CD4-positive, alpha-beta T cell (primary cell): ENCODE measurements at regions of chr12 and their contacts with region 1.

Region 1: DNA sequence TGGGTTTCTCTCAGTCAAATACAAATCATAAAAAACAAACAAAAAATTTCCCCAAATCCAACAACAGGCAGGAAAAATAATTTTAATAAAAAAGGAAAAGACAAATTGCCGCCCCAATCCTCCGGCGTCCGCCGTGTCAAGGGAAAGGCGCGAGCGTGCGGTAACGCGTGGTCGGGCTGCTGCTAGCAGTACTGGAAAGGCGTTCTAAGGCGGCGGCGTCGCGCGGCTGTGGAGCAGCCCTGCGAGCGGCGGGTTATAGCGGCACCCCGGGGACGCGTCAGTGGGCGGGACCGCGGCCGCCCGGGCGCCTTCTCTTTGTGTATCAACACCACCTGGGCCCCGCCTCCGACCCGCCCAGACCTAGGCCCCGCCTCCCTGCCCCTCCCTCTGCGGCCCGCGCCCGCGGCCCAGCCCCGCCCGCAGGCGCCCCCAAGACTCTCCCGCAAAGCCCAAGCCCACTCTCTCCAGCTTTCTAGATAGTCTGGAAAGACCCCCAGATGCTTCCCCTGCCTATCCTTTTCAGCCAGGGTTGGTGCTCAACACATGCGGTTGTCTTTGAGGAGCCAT is at the start of gene SLC38A2:
- DNase-seq: peak; percentile 95 to 99 (median 97)
- ATAC-seq: peak; percentile 79
- H3K4me3 ChIP-seq: peak within 1 kb of the TSS; percentile 96
- H3K4me3 Mint-ChIP-seq: peak within 1 kb of the TSS; percentile 98
- H3K27ac ChIP-seq: peak within 1 kb of the TSS; percentile 85 to 94
- H3K27ac Mint-ChIP-seq: peak within 1 kb of the TSS; percentile 99
- H3K4me1 ChIP-seq: peaks cover 32% of the 10 kb centered on the region
- H3K4me1 Mint-ChIP-seq: peaks cover 64% of the 10 kb centered on the region
- H3K27me3 ChIP-seq: no peaks in the 10 kb centered on the region
- H3K27me3 Mint-ChIP-seq: peaks cover 7% of the 10 kb centered on the region
- CTCF ChIP-seq: no peak
- total RNA-seq, gene SLC38A2: 213 to 222 TPM

Region 2: GRCh38 chr12:45728630-45729232 is 643.9 kb before region 1 on chr12:
- CTCF ChIA-PET with region 1: no interaction called
- POLR2A ChIA-PET with region 1: interaction called, 5 read pairs
- intact Hi-C with region 1: loop called (anchors 5 kb)
- DNase-seq: peak; percentile 94 to 99 (median 96)
- ATAC-seq: peak; percentile 71
- H3K4me3 ChIP-seq: peak overlapping the region; percentile 77
- H3K4me3 Mint-ChIP-seq: peak overlapping the region; percentile 100
- H3K27ac ChIP-seq: peak overlapping the region; percentile 98 to 99
- H3K27ac Mint-ChIP-seq: peak overlapping the region; percentile 84
- H3K4me1 ChIP-seq: peaks cover 8% of the 10 kb centered on the region
- H3K4me1 Mint-ChIP-seq: peaks cover 37% of the 10 kb centered on the region
- H3K27me3 ChIP-seq: no peaks in the 10 kb centered on the region
- H3K27me3 Mint-ChIP-seq: no peaks in the 10 kb centered on the region
- CTCF ChIP-seq: peak; percentile 89

Region 3: GRCh38 chr12:45938566-45938965 is 434.1 kb before region 1 on chr12:
- CTCF ChIA-PET with region 1: no interaction called
- POLR2A ChIA-PET with region 1: no interaction called
- intact Hi-C with region 1: no loop called
- DNase-seq: no peak
- ATAC-seq: no peak
- H3K4me3 ChIP-seq: no peak overlapping the region
- H3K4me3 Mint-ChIP-seq: no peak overlapping the region
- H3K27ac ChIP-seq: no peak overlapping the region
- H3K27ac Mint-ChIP-seq: no peak overlapping the region
- H3K4me1 ChIP-seq: no peaks in the 10 kb centered on the region
- H3K4me1 Mint-ChIP-seq: peaks cover 35% of the 10 kb centered on the region
- H3K27me3 ChIP-seq: no peaks in the 10 kb centered on the region
- H3K27me3 Mint-ChIP-seq: no peaks in the 10 kb centered on the region
- CTCF ChIP-seq: no peak

Region 4: GRCh38 chr12:46153268-46153872 is 219.3 kb before region 1 on chr12:
- CTCF ChIA-PET with region 1: no interaction called
- POLR2A ChIA-PET with region 1: no interaction called
- intact Hi-C with region 1: loop called in 1 of 2 experiments (anchors 10 kb)
- DNase-seq: peak in 3 of 14 experiments; percentile 51 to 58 (median 57)
- ATAC-seq: no peak
- H3K4me3 ChIP-seq: no peak overlapping the region
- H3K4me3 Mint-ChIP-seq: no peak overlapping the region
- H3K27ac ChIP-seq: no peak overlapping the region
- H3K27ac Mint-ChIP-seq: no peak overlapping the region
- H3K4me1 ChIP-seq: no peaks in the 10 kb centered on the region
- H3K4me1 Mint-ChIP-seq: peaks cover 18% of the 10 kb centered on the region
- H3K27me3 ChIP-seq: no peaks in the 10 kb centered on the region
- H3K27me3 Mint-ChIP-seq: peaks cover 10% of the 10 kb centered on the region
- CTCF ChIP-seq: peak; percentile 90

Region 5: DNA sequence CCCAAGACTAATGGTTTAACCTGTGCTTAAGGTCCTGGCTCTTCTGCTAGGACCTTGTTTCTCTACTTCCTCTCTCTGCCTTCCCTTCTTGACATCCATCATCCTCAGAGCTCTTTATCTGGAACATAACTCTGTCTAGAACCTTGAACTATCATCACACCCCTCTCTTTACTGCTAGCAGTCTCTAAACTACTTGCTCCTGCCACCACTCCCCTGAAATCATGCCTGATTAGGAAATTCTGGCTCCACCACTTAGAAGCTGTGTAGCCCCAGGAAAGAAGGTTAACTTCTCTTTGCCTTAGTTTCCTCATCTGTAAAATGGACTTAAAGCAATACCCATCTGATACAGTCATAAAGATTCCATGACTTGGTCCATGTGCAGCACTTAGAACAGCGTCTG is 112.9 kb before region 1 on chr12:
- CTCF ChIA-PET with region 1: no interaction called
- POLR2A ChIA-PET with region 1: no interaction called
- intact Hi-C with region 1: no loop called
- DNase-seq: no peak
- ATAC-seq: no peak
- H3K4me3 ChIP-seq: no peak overlapping the region
- H3K4me3 Mint-ChIP-seq: no peak overlapping the region
- H3K27ac ChIP-seq: no peak overlapping the region
- H3K27ac Mint-ChIP-seq: no peak overlapping the region
- H3K4me1 ChIP-seq: peaks cover 64% of the 10 kb centered on the region
- H3K4me1 Mint-ChIP-seq: peaks cover 34% of the 10 kb centered on the region
- H3K27me3 ChIP-seq: no peaks in the 10 kb centered on the region
- H3K27me3 Mint-ChIP-seq: no peaks in the 10 kb centered on the region
- CTCF ChIP-seq: no peak

Region 6: DNA sequence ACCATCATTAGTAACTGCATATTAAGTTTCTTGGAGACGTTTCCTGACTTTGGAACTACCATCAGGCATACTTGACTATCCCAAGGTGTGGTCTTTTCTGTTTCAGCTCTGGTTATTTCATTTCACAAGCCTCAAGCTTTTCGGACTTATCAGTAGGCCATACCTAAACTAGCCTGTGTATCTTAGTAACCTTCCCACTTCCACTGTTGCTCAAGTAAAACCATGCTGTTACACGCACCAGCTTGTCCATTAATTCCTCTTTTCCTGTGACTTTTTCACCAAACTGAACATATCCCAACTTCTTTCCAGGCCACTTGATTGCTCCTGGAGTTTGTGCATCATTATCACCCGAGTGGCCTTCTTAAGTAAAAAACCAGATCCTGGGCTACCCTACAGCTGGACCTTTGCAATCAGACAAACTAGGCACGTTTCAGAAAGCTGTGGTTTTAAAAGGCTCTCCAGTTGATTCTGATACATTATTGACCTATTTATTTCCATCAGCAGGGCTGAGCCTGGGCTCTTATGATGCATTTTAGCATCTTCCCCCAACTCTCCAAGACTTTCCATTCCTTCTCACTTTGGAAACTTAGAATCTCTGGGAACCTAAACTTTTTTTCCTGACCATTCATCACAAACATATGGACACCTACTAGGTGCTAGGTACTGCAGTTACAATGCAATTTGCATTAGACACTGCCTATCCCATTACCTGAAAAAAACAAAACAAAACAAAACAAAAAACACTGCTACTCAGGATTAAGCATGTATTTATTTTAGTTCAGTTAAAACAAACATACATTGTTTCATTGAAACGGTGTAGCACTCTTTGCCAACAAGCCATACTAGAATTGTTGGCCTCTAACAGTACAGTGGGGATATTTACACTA is 14.9 kb before region 1 on chr12:
- CTCF ChIA-PET with region 1: interaction called, 3 read pairs
- POLR2A ChIA-PET with region 1: interaction called, 19 read pairs
- intact Hi-C with region 1: no loop called
- DNase-seq: no peak
- ATAC-seq: no peak
- H3K4me3 ChIP-seq: no peak overlapping the region
- H3K4me3 Mint-ChIP-seq: no peak overlapping the region
- H3K27ac ChIP-seq: no peak overlapping the region
- H3K27ac Mint-ChIP-seq: peak overlapping the region; percentile 75
- H3K4me1 ChIP-seq: no peaks in the 10 kb centered on the region
- H3K4me1 Mint-ChIP-seq: peaks cover 41% of the 10 kb centered on the region
- H3K27me3 ChIP-seq: no peaks in the 10 kb centered on the region
- H3K27me3 Mint-ChIP-seq: no peaks in the 10 kb centered on the region
- CTCF ChIP-seq: no peak

Region 7: GRCh38 chr12:46459861-46460545 is 87.4 kb after region 1 on chr12:
- CTCF ChIA-PET with region 1: no interaction called
- POLR2A ChIA-PET with region 1: interaction called, 10 read pairs
- intact Hi-C with region 1: loop called in 1 of 2 experiments (anchors 5 kb)
- DNase-seq: peak in 5 of 14 experiments; percentile 14 to 51 (median 35)
- ATAC-seq: peak; percentile 62
- H3K4me3 ChIP-seq: peak overlapping the region; percentile 10
- H3K4me3 Mint-ChIP-seq: peak overlapping the region; percentile 84
- H3K27ac ChIP-seq: peak overlapping the region in 1 of 2 donors; percentile 50
- H3K27ac Mint-ChIP-seq: peak overlapping the region; percentile 76
- H3K4me1 ChIP-seq: peaks cover 42% of the 10 kb centered on the region
- H3K4me1 Mint-ChIP-seq: peaks cover 61% of the 10 kb centered on the region
- H3K27me3 ChIP-seq: no peaks in the 10 kb centered on the region
- H3K27me3 Mint-ChIP-seq: no peaks in the 10 kb centered on the region
- CTCF ChIP-seq: no peak

Region 8: GRCh38 chr12:46585854-46586621 is 213.4 kb after region 1 on chr12:
- CTCF ChIA-PET with region 1: no interaction called
- POLR2A ChIA-PET with region 1: interaction called, 16 read pairs
- intact Hi-C with region 1: no loop called
- DNase-seq: peak; percentile 15 to 83 (median 51)
- ATAC-seq: peak; percentile 61
- H3K4me3 ChIP-seq: no peak overlapping the region
- H3K4me3 Mint-ChIP-seq: peak overlapping the region; percentile 71
- H3K27ac ChIP-seq: peak overlapping the region in 1 of 2 donors; percentile 13
- H3K27ac Mint-ChIP-seq: peak overlapping the region; percentile 87
- H3K4me1 ChIP-seq: peaks cover 14% of the 10 kb centered on the region
- H3K4me1 Mint-ChIP-seq: peaks cover 80% of the 10 kb centered on the region
- H3K27me3 ChIP-seq: no peaks in the 10 kb centered on the region
- H3K27me3 Mint-ChIP-seq: no peaks in the 10 kb centered on the region
- CTCF ChIP-seq: no peak

Region 9: DNA sequence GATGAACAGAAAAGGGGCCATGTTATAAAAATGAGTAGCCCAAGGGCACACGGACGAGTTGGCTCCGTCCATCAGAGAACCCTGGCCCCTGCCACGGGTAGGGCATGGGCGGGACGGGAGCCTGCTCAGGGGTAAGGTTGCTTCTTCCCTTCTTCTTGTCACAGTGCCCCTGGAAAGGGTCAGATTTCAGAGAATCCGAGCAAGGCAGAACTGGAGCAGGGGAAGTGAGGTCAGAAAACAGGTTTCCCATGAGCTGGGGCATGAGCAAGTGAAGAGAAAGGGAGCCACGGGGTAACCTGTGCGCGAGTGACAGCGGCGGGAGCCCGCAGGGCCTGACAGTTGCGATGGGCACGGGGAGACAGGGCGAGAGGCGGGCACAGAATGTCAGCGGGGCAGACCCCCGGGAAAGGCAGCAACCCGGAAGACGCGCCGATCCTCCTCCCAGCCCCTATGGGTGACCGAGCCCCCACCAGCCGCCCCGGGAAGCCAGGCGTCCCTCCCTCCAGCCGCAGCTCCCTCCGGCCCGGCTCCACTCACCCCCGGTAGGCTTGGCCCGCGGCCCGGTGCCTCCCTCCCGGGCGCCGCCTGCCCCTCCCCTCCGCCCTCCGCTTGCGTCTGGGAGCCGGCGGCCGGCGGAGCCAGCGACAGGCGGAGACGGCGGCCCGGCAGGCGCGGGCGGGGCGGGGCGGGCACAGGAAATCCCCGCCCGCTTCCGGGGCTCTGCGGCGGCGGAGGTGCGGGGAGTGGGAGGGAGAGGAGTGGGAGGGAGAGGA is 1977.8 kb after region 1 on chr12 and contains the start of gene ZNF641:
- CTCF ChIA-PET with region 1: no interaction called
- POLR2A ChIA-PET with region 1: no interaction called
- intact Hi-C with region 1: loop called in 1 of 2 experiments (anchors 10 kb)
- DNase-seq: peak; percentile 68 to 94 (median 80)
- ATAC-seq: peak; percentile 88
- H3K4me3 ChIP-seq: peak within 1 kb of the TSS; percentile 96
- H3K4me3 Mint-ChIP-seq: peak within 1 kb of the TSS; percentile 97
- H3K27ac ChIP-seq: peak within 1 kb of the TSS; percentile 70 to 81
- H3K27ac Mint-ChIP-seq: peak within 1 kb of the TSS; percentile 98
- H3K4me1 ChIP-seq: peaks cover 19% of the 10 kb centered on the region
- H3K4me1 Mint-ChIP-seq: peaks cover 47% of the 10 kb centered on the region
- H3K27me3 ChIP-seq: no peaks in the 10 kb centered on the region
- H3K27me3 Mint-ChIP-seq: no peaks in the 10 kb centered on the region
- CTCF ChIP-seq: no peak
- total RNA-seq, gene ZNF641: 16.6 to 19.8 TPM